OCI-LY7 (cell line): ENCODE measurements at regions of chr4 and their contacts with region 1.

Region 1: GRCh38 chr4:55546756-55547465 is at the start of gene CLOCK:
- DNase-seq: peak; percentile 86
- H3K4me3 ChIP-seq: peak within 1 kb of the TSS; percentile 79
- H3K27ac ChIP-seq: peak within 1 kb of the TSS; percentile 45
- H3K4me1 ChIP-seq: peaks cover 7% of the 10 kb centered on the region
- CTCF ChIP-seq: peak; percentile 68
- total RNA-seq, gene CLOCK: 1.9 and 2.0 TPM in 2 replicates

Region 2: GRCh38 chr4:55517526-55518229 is 29.2 kb before region 1 on chr4:
- CTCF ChIA-PET with region 1: no interaction called
- POLR2A ChIA-PET with region 1: no interaction called
- intact Hi-C with region 1: loop called (anchors 2 kb)
- DNase-seq: no peak
- H3K4me3 ChIP-seq: no peak overlapping the region
- H3K27ac ChIP-seq: no peak overlapping the region
- H3K4me1 ChIP-seq: no peaks in the 10 kb centered on the region
- CTCF ChIP-seq: no peak